Sciatic nerve (tissue), 2 donors: ENCODE measurements at regions of chr1 and their contacts with region 1.

Region 1: DNA sequence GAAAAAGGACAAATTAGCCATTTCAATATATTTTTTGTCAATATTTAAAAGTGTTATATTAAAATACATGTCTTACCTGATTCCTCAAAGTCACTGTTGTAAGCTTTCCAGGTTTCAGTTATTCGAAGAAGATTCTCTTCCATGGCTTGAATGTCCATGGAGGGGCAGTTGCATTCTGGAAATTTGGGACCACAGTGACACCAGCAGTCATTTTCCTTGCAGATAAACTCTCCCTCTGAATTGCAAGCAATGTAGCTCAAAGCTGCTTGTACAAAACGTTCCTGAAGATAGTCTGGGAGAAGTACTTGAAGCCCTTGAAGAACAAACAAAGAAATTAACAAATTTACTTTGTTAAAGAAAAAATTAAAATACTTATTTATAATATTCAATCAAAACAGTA is 251.7 kb downstream of the BRINP3 start:
- DNase-seq: no peak
- ATAC-seq: no peak

Region 2: DNA sequence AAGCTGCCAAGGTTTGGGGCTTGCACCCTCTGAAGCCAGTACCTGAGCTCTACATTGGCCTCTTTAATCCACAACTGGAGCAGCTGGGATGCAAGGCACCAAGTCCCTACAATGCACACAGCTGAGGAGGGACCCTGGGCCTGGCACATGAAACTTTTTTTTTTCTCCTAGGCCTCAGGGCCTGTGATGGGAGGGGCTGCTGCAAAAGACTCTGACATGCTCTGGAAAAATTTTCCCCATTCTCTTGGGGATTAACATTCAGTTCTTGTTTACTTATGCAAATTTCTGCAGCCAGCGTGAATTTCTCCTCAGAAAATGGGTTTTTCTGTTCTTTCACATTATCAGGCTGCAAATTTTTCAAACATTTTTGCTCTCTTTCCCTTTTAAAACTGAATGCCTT is 820.6 kb before region 1 on chr1:
- intact Hi-C with region 1: no loop called
- DNase-seq: no peak
- ATAC-seq: no peak

Region 3: DNA sequence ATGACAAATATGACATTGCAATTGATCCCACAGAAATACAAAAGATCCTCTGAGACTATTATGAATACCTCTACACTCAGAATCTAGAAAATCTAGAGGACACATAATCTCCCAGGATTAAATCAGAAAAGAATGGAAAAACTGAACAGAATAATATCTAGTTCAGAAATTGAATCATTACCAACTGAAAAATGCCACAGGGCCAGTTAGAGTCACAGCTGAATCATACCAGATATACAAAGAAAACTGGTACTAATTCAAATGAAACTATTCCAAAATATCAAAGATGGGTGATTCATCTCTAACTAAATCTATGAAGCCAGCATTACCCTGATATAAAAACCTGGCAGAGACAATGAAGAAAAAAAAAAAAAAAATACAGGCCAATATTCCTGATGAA is 102.4 kb after region 1 on chr1:
- intact Hi-C with region 1: no loop called
- DNase-seq: no peak
- ATAC-seq: no peak

Region 4: GRCh38 chr1:190578017-190578416 is 352.0 kb after region 1 on chr1:
- intact Hi-C with region 1: no loop called
- DNase-seq: no peak
- ATAC-seq: no peak

Region 5: GRCh38 chr1:191206513-191207207 is 980.7 kb after region 1 on chr1:
- intact Hi-C with region 1: loop called (anchors 10 kb)
- DNase-seq: no peak
- ATAC-seq: no peak